Calu3 (cell line): ENCODE measurements at regions of chr14 and their contacts with region 1.

Region 1: GRCh38 chr14:63672417-63673180 is 30.9 kb upstream of the WDR89 start:
- DNase-seq: peak; percentile 49
- H3K4me3 Mint-ChIP-seq: peak overlapping the region; percentile 48
- H3K27ac Mint-ChIP-seq: peak overlapping the region; percentile 17
- H3K4me1 Mint-ChIP-seq: peaks cover 30% of the 10 kb centered on the region
- H3K27me3 Mint-ChIP-seq: no peaks in the 10 kb centered on the region
- CTCF ChIP-seq: no peak

Region 2: GRCh38 chr14:63418020-63418419 is 254.6 kb before region 1 on chr14:
- CTCF ChIA-PET with region 1: no interaction called
- intact Hi-C with region 1: no loop called
- DNase-seq: no peak
- H3K4me3 Mint-ChIP-seq: no peak overlapping the region
- H3K27ac Mint-ChIP-seq: no peak overlapping the region
- H3K4me1 Mint-ChIP-seq: no peaks in the 10 kb centered on the region
- H3K27me3 Mint-ChIP-seq: no peaks in the 10 kb centered on the region
- CTCF ChIP-seq: no peak

Region 3: DNA sequence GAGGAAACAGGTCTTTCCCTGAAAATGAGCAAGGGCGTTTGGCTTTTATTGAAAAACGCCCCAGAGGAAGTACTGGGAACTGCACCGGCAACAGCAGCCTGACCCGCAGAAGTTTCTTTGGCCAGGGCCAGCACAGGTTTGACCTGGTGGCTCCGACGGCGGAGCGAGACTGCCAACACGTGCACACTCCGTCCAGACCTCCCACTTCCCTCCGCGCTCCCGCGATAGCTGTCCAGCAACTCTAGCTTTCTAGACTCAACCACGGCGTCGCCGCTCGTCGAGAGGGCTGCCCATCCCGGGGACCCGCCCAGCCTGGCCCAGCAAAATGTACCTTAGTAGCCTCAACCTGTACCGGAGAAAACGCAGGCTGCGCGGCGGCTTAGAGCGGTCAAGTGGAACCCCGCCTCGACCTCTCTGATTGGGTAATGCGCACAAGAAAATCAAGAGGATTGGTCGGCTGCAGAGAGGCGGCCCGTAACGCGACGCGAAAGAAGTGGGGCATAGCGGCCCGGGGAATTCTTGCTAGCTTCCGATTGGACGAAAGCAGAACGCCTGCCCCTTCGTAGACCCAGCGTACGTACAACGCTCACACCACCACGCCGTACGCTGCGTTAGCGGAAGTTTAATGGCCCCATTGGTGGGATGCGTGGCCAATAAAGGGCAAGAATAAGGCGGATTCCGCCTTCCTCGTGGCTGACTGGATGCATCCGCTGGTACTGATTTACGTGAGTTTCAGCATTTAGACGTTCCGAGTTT is 30.9 kb before region 1 on chr14 and contains the start of gene WDR89:
- CTCF ChIA-PET with region 1: interaction called, 4 read pairs
- intact Hi-C with region 1: loop called (anchors 5 kb)
- DNase-seq: peak; percentile 95
- H3K4me3 Mint-ChIP-seq: peak within 1 kb of the TSS; percentile 84
- H3K27ac Mint-ChIP-seq: peak within 1 kb of the TSS; percentile 97
- H3K4me1 Mint-ChIP-seq: peaks cover 9% of the 10 kb centered on the region
- H3K27me3 Mint-ChIP-seq: no peaks in the 10 kb centered on the region
- CTCF ChIP-seq: peak; percentile 78
- total RNA-seq, gene WDR89: 19.7 and 20.8 TPM in 2 replicates

Region 4: DNA sequence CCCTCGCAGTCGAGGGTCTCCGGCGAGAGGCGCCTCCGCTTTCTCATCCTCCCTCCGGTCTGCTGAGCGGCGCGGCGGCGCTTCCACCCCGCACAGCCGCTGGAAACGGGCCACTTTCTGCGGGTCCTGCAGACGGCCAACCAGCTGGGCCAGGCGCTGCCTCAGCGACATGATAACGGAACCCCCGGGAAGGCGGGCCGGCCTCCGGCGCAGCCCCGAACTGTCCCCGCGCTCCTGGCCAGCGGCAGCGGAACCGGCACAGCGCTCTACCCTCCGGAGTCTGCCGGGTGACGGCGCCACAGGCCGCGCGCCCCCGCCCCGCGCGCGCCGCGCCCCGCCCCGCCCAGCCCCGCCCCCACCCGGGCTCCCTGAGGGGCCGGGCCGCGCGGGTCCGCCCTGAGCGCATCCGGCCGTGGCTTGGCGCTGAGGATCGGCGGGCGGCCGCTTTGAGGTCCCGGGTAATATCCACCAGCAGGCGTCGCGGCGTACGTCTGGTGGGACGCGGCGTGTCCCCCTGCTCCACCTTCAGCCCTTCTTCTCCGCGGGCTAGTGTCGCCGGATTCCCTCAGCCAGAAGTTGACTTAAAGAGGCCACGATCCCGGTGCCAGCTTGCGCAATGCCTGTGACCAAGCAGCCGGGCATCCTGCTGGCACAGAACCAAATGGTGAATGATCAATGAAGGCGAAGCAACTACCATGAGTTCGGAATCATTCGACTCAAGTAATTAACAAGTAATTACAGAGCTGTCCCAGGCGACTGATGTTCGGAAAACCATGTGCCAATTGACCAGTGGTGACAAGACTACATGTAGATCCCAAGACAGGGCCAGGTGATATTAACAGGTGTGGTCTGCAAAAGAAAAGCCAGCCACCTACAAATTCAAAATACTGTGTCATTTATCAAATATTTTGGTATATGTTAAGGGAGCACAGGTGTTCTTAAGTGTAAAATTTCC is 55.5 kb after region 1 on chr14 and contains the start of gene SGPP1:
- CTCF ChIA-PET with region 1: interaction called, 3 read pairs
- intact Hi-C with region 1: loop called (anchors 5 kb)
- DNase-seq: peak; percentile 85
- H3K4me3 Mint-ChIP-seq: peak within 1 kb of the TSS; percentile 93
- H3K27ac Mint-ChIP-seq: peak within 1 kb of the TSS; percentile 87
- H3K4me1 Mint-ChIP-seq: peaks cover 37% of the 10 kb centered on the region
- H3K27me3 Mint-ChIP-seq: no peaks in the 10 kb centered on the region
- CTCF ChIP-seq: no peak
- total RNA-seq, gene SGPP1: 26.2 and 27.0 TPM in 2 replicates

Region 5: DNA sequence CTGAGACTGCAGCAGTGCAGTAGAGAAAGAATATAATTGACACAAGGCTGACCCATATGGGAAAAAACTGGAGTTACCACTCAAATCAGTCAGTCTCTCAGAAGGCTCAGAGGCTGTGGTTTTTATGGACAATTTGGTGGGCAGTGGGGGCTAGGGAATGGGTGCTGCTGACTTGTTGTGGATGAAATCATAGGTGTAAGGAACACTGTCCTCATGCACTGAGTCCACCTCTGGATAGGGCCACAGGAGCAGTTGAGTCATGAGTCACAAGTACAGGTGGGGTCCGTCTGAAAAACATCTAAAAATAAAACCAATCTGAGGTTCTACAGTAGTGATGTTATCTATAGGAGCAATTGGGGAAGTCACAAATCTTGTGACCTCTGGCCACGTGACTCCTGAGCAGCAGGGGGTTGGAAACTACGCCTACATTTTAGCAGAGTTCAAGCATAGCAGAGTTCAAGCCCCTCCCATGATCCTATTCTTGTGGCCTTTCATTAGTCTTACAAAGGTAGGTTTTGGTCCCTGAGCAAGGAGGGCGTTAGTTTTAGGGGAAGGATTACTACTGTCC is 73.3 kb after region 1 on chr14:
- CTCF ChIA-PET with region 1: no interaction called
- intact Hi-C with region 1: loop called (anchors 5 kb)
- DNase-seq: peak; percentile 6
- H3K4me3 Mint-ChIP-seq: no peak overlapping the region
- H3K27ac Mint-ChIP-seq: no peak overlapping the region
- H3K4me1 Mint-ChIP-seq: peaks cover 16% of the 10 kb centered on the region
- H3K27me3 Mint-ChIP-seq: no peaks in the 10 kb centered on the region
- CTCF ChIP-seq: no peak